Cardiac septum (tissue), 1 donor: ENCODE measurements at regions of chr3 and their contacts with region 1.

Region 1: GRCh38 chr3:117722856-117723255 is 1013.3 kb downstream of the TUSC7 start:
- DNase-seq: no peak

Region 2: DNA sequence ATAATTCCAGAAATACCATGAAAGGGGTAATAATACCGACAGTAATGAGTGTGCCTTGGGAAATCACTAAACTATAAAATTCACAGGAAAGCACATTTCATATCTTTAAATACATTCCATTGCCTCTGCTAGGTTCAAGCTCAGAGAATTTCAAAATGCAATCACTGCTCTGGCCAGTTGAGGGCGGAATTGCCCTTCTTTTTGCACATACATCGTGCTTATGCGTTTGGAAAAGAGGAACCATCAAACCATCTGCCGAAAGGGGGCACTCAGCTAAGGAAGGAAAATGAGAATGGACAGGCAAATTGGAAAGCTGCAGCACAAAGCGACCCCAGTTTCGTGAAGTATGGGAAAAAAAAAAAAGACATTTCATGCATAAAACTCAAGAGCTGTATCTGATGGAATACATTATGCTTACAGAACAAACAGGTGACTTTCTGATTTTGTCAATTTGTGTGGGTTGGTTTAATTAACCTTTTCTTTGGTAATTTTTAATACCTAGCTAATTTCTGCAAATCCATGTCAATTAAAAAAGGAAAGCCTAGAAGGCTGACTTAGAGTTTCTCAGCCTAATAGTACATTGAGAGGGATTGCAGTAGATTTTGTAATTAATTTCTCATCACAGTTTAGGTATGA is 951.9 kb before region 1 on chr3:
- intact Hi-C with region 1: loop called (anchors 10 kb)
- DNase-seq: no peak